Left ventricle myocardium superior (tissue), 1 donor: ENCODE measurements at regions of chr1 and their contacts with region 1.

Region 1: DNA sequence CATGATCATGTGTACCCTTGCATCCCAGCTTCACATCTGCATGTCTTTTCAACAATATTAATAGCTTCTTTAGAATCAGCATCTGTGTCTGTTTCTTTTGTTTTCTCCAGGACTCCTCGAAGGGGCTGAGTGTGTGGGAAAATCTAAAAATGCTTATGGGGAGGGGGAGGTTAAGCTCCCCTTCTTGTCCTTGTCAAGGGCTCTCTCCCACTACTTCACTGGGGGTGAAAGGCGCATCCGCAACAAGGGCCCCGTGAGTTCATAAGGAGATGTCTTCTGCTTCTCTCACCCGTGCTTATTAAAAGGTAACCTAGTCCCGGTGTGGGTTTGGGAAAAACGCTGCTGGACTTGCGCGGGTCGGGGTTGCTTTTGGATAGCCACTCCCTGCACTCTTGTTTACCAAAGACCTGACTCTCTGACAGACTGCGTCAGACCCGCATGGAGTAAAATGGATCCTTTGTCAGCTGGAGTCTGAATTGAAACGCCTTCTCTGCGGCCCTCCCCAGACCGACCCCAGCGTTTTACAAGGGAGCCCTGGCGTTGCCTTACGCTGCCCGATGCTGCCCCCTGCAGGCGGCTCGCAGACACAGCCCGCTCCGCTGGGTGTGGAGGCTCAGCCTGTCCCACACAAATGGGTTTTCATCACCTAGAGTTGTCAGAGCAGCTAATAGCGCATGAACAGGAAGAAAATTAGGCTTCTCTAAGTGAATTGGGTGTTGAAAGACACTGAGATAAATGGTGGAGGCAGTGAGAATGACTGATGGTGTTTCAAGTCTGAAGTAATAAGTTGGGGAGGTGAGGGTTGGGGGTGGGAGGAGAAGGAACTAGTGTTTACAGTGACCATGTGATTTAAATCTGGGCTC is 53.8 kb downstream of the IER5 start:
- DNase-seq: peak; percentile 92
- ATAC-seq: peak; percentile 96

Region 2: GRCh38 chr1:181038399-181038873 is 103.9 kb before region 1 on chr1:
- intact Hi-C with region 1: loop called (anchors 5 kb)
- DNase-seq: peak; percentile 38
- ATAC-seq: peak; percentile 77

Region 3: DNA sequence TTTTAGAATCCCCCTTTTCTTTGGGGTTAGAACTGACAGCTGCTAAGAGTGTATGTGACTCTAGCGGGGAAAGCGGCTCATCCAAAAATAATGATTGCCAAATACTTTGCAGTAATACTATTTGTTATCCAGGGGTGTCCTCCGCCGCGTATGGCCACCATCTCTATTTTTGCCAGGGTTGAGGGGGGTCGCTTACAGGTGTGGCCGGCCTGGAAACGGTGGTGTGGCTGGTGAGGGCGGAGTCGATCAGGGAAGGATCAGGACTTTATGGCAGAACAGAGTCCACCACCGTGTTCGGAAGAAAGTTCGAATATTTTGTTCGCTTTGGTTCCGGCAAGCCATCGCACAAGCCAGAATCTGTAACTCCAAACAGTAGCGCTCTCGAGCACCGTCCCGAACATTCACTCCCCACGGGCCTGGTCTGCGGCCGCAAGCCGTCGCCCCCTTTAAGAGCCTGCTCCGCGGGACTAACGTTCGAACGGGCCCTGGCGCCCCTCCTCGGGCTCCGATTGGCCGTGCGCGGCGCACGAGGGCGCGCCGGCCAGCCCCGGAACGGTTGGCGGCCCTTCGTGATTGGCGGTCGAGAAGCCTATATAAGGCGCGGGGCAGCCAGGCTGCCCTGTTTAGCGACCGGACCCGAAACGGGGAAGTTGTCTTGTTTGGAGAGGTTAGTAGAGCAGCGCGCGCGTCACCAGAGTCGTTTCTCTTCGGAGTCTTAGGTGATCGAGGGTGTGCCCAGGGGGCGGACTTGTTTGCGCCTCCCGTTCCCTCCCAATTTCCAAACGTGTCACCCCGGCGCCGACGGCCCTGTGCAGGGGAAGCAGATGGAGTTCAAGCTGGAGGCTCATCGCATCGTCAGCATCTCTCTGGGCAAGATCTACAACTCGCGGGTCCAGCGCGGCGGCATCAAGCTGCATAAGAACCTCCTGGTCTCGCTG is 54.0 kb before region 1 on chr1 and contains the start of gene IER5:
- intact Hi-C with region 1: loop called (anchors 10 kb)
- DNase-seq: peak; percentile 95
- ATAC-seq: peak; percentile 91
- total RNA-seq, gene IER5: 15.9 TPM

Region 4: DNA sequence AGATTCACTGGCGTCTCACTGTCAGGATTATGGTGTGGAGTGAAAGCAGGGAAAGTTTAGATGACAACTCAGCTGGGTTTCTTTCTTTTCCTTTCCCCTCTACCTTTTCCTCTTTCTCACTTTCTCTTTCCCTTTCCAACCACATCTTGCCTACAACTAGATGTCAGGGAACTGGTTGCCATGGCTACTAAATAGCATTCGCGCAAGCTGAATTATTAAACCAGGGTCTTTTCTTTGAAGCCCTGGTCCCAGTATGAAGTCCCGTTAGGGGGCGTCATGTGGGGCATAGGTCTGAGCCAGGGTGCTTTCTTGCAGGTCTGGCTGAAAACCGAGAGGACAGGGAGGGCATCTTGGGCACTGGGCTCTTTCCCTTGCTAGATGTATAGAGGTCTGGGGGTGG is 172.6 kb after region 1 on chr1:
- intact Hi-C with region 1: no loop called
- DNase-seq: no peak
- ATAC-seq: no peak